Common myeloid progenitor, CD34-positive (primary cell): ENCODE measurements at regions of chr1 and their contacts with region 1.

Region 1: GRCh38 chr1:65687428-65688214 is 105.1 kb upstream of the PDE4B start:
- DNase-seq: peak; percentile 78 to 87 (median 79)
- H3K4me3 ChIP-seq: peak overlapping the region in 2 of 7 experiments; percentile 25 to 54
- H3K27ac ChIP-seq: no peak overlapping the region
- H3K4me1 ChIP-seq: peaks cover 15 to 37% (median 26%) of the 10 kb centered on the region in 4 experiments
- H3K27me3 ChIP-seq: peaks cover 0 to 2% (median 0%) of the 10 kb centered on the region in 5 experiments

Region 2: GRCh38 chr1:64839732-64840405 is 847.8 kb before region 1 on chr1:
- CTCF ChIA-PET with region 1: no interaction called
- POLR2A ChIA-PET with region 1: no interaction called
- DNase-seq: no peak
- H3K4me3 ChIP-seq: no peak overlapping the region
- H3K27ac ChIP-seq: no peak overlapping the region
- H3K4me1 ChIP-seq: no peaks in the 10 kb centered on the region
- H3K27me3 ChIP-seq: no peaks in the 10 kb centered on the region

Region 3: DNA sequence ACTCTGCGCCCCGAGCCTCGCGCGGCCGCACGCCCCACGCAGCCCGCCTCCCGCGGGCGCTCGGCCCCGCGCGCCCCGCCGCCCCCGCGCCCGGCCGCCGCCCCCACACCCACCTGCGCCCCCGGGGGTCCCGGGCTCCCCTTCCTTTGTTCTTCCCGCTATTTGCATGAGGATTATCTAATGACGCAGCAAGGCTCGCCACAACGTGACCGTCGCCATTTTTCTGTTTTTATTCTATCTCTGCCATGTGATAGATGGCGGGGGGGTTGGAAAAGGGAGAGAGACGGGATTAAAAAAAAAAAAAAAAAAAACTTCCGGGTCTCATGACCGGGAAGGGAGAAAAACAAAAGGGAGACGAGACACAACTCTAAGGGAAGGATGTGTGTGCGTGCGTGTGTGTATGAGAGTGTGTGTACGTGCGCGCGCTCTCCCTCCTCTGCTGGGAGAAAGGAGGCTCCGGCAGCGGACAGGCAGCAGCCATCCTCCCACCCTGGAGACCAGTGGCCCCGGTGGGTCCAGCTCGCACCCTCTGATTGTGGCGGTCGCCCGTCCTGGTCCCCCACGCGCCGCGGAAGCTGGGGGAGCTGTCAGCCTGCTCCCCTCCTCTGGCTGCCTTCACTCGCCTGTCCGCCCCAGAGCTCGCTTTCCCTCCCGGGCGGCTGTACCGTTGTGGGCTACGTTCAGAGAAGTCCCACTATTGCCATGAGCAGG is 620.0 kb before region 1 on chr1:
- CTCF ChIA-PET with region 1: interaction called, 33 read pairs
- POLR2A ChIA-PET with region 1: no interaction called
- DNase-seq: peak; percentile 68 to 88 (median 86)
- H3K4me3 ChIP-seq: peak overlapping the region; percentile 85 to 98 (median 95)
- H3K27ac ChIP-seq: peak overlapping the region; percentile 93 to 97
- H3K4me1 ChIP-seq: peaks cover 19 to 57% (median 35%) of the 10 kb centered on the region in 4 experiments
- H3K27me3 ChIP-seq: no peaks in the 10 kb centered on the region

Region 4: GRCh38 chr1:65209005-65209885 is 478.4 kb before region 1 on chr1:
- CTCF ChIA-PET with region 1: interaction called, 11 read pairs
- POLR2A ChIA-PET with region 1: no interaction called
- DNase-seq: peak; percentile 50 to 58 (median 57)
- H3K4me3 ChIP-seq: no peak overlapping the region
- H3K27ac ChIP-seq: no peak overlapping the region
- H3K4me1 ChIP-seq: peaks cover 3 to 25% (median 14%) of the 10 kb centered on the region in 4 experiments
- H3K27me3 ChIP-seq: no peaks in the 10 kb centered on the region

Region 5: DNA sequence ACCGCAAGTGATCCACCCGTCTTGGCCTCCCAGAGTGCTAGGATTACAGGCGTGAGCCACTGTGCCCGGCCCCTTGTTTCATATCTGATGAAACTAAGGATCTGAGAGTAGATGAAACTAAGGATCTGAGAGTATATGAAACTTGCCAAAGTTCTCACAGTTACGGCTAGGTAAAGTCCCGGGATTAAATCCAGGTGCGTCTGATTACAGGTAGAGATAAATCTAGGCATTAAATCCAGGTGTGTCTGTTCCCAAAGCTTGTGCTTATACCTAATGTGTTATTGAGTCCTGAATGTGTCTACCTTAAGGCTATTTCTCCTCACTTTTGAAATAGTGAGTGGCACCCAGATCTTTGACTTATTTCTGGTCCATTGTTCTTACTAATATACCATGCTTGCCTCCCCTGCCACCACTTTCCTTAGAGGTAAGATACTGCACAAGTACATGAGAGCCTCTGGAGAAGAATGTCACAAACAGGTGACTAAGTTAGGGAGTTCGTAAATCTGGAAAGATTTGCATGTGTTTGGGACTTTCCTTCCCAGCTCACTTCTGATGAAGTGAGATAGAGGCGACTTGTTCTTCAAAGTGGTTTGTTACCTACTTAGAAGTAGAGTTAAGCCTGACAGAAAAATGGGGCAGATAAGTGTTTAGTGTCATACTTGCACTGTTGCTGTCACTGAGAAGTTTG is 473.1 kb before region 1 on chr1:
- CTCF ChIA-PET with region 1: interaction called, 19 read pairs
- POLR2A ChIA-PET with region 1: no interaction called
- DNase-seq: no peak
- H3K4me3 ChIP-seq: no peak overlapping the region
- H3K27ac ChIP-seq: no peak overlapping the region
- H3K4me1 ChIP-seq: peaks cover 0 to 3% (median 0%) of the 10 kb centered on the region in 4 experiments
- H3K27me3 ChIP-seq: no peaks in the 10 kb centered on the region

Region 6: GRCh38 chr1:65235867-65236805 is 451.5 kb before region 1 on chr1:
- CTCF ChIA-PET with region 1: interaction called, 18 read pairs
- POLR2A ChIA-PET with region 1: no interaction called
- DNase-seq: peak; percentile 66 to 80 (median 80)
- H3K4me3 ChIP-seq: no peak overlapping the region
- H3K27ac ChIP-seq: no peak overlapping the region
- H3K4me1 ChIP-seq: peaks cover 7 to 42% (median 26%) of the 10 kb centered on the region in 4 experiments
- H3K27me3 ChIP-seq: no peaks in the 10 kb centered on the region

Region 7: DNA sequence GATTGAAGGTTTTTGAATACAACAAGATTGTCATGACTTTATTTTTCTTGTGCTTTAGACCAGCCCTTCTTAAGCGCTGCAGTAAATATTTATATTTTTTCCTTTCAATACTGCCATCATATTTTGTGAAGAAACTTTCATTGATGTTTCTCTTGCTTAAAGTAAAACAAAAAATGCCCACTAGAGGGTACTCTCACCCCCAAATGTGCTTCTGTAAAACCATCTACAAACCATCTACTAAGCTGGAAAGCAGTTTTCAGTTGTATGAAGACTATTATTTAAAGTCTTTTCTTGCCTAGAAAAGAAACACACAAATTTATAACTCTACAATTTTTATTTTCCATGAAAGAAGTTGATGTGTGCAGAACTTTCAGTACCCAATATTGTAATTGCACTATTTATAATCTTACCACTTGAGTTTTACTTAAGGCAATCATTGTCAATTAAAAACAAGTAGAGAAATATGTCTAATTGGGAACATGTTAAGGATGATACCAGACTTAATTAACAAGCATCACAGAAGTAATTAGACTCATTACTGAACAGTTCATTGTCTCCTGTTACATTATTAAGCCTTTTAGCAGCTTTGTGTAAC is 256.4 kb before region 1 on chr1:
- CTCF ChIA-PET with region 1: interaction called, 17 read pairs
- POLR2A ChIA-PET with region 1: no interaction called
- DNase-seq: peak; percentile 58 to 80 (median 74)
- H3K4me3 ChIP-seq: peak overlapping the region in 1 of 7 experiments; percentile 13
- H3K27ac ChIP-seq: no peak overlapping the region
- H3K4me1 ChIP-seq: peaks cover 0 to 40% (median 20%) of the 10 kb centered on the region in 4 experiments
- H3K27me3 ChIP-seq: no peaks in the 10 kb centered on the region

Region 8: DNA sequence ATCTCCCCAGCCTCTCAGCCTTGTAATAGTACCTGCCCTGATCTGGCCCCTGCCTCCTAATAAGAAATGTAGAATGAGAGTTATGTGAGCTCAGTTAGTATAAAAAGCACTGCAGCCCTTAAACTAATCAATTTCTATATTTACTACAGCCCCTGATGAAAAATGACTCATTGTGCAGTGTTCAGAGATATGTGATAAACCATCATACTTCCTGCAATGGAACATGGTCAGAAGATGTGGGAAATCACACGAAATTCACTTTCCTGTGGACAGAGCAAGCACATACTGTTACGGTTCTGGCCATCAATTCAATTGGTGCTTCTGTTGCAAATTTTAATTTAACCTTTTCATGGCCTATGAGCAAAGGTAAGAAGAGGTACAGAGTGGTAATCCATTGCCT is 71.8 kb before region 1 on chr1:
- CTCF ChIA-PET with region 1: no interaction called
- POLR2A ChIA-PET with region 1: no interaction called
- DNase-seq: no peak
- H3K4me3 ChIP-seq: no peak overlapping the region
- H3K27ac ChIP-seq: no peak overlapping the region
- H3K4me1 ChIP-seq: peaks cover 0 to 8% (median 5%) of the 10 kb centered on the region in 4 experiments
- H3K27me3 ChIP-seq: no peaks in the 10 kb centered on the region

Region 9: DNA sequence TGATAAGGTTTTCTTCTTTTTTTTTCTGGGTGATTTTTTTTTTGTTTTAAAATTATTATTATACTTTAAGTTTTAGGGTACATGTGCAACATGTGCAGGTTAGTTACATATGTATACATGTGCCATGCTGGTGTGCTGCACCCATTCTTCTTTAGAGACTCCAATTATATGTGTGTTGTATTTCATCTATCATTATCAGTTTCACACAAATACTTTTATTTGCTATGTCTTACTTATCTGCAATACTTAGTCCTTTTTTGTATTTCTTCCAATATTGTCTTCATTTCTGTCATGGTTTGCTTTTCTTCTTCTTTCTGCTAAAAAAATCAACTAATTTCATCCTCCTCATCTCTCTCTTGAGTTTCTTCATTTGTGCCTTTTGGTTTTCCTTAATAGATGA is 101.1 kb after region 1 on chr1:
- CTCF ChIA-PET with region 1: no interaction called
- POLR2A ChIA-PET with region 1: no interaction called
- DNase-seq: no peak
- H3K4me3 ChIP-seq: no peak overlapping the region
- H3K27ac ChIP-seq: no peak overlapping the region
- H3K4me1 ChIP-seq: peaks cover 1 to 20% (median 19%) of the 10 kb centered on the region in 4 experiments
- H3K27me3 ChIP-seq: peaks cover 4 to 36% (median 21%) of the 10 kb centered on the region in 5 experiments